Naive thymus-derived CD8-positive, alpha-beta T cell (primary cell): ENCODE measurements at regions of chr3 and their contacts with region 1.

Region 1: DNA sequence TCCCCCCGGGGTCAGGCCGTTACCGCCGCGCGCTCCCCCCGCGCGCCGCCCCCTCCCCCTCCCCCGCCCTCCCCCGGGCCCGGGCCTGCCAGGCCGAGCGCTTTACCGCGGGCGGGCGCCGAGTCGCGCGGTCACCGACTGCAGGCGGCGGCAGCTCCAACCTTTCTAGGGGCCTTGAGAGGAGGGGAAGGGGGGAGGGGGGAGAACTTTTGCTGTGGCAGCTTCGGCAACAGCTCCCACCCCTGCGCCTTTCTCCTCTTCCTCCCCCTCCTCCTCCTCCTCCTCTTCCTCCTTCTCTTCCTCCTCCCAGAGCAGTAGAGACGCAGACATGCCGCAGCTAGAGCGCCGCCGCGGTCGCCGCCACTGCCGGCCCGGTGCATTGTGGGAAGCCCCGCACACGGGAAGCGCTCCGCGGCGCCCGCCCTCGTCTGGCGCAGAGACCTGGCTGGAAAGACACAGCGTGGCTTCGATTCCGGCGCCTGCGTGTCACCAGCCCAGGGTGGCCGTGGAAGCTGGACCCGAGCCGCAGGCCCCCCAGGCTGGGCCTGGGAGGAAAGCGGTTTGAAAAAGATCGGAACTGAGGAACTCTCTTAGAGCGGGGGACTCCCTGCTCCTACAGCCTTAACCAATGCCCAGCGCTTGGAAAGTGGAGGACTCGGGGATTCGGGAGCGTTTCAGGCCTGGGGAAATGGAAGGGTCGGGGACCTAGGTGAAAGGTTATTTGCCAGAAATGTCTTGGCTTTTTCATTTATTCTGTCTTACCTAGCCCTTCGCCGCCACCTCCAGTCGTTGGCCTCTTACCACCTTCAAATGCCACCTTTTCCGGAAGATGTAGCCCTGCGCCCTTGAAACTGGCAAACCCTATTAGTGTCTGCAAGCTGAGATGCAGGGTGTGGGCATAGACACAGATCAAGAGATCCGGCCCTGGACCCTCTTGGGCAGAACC is at the start of gene ZNF148:
- DNase-seq: peak; percentile 85 to 96 (median 91)
- ATAC-seq: peak; percentile 90 to 91
- H3K4me3 Mint-ChIP-seq: peak within 1 kb of the TSS; percentile 94 to 99 (median 96)
- H3K27ac Mint-ChIP-seq: peak within 1 kb of the TSS; percentile 95 to 99 (median 98)
- H3K4me1 Mint-ChIP-seq: peaks cover 35 to 51% (median 44%) of the 10 kb centered on the region in 4 donors
- H3K27me3 Mint-ChIP-seq: no peaks in the 10 kb centered on the region
- polyA plus RNA-seq, gene ZNF148: 80.7 to 100 (median 85.9) TPM

Region 2: GRCh38 chr3:125334675-125335560 is 40.4 kb before region 1 on chr3:
- POLR2A ChIA-PET with region 1: no interaction called
- DNase-seq: no peak
- ATAC-seq: no peak
- H3K4me3 Mint-ChIP-seq: peak overlapping the region in 1 of 10 donors; percentile 42
- H3K27ac Mint-ChIP-seq: peak overlapping the region in 6 of 10 donors; percentile 13 to 83 (median 45)
- H3K4me1 Mint-ChIP-seq: peaks cover 26 to 63% (median 48%) of the 10 kb centered on the region in 4 donors
- H3K27me3 Mint-ChIP-seq: no peaks in the 10 kb centered on the region

Region 3: GRCh38 chr3:125357032-125357658 is 18.1 kb before region 1 on chr3:
- POLR2A ChIA-PET with region 1: interaction called, 33 read pairs
- DNase-seq: peak; percentile 49 to 90 (median 71)
- ATAC-seq: peak; percentile 96 to 97
- H3K4me3 Mint-ChIP-seq: peak overlapping the region; percentile 77 to 94 (median 88)
- H3K27ac Mint-ChIP-seq: peak overlapping the region; percentile 86 to 97 (median 96)
- H3K4me1 Mint-ChIP-seq: peaks cover 38 to 80% (median 73%) of the 10 kb centered on the region in 4 donors
- H3K27me3 Mint-ChIP-seq: no peaks in the 10 kb centered on the region

Region 4: GRCh38 chr3:125594581-125595011 is 219.3 kb after region 1 on chr3:
- POLR2A ChIA-PET with region 1: interaction called, 10 read pairs
- DNase-seq: peak in 1 of 10 donors; percentile 10
- ATAC-seq: no peak
- H3K4me3 Mint-ChIP-seq: peak overlapping the region; percentile 93 to 99 (median 96)
- H3K27ac Mint-ChIP-seq: peak overlapping the region; percentile 64 to 98 (median 93)
- H3K4me1 Mint-ChIP-seq: peaks cover 21 to 52% (median 40%) of the 10 kb centered on the region in 4 donors
- H3K27me3 Mint-ChIP-seq: no peaks in the 10 kb centered on the region